ENCODE measurements at regions of chr11 and their contacts with region 1.

Region 1: DNA sequence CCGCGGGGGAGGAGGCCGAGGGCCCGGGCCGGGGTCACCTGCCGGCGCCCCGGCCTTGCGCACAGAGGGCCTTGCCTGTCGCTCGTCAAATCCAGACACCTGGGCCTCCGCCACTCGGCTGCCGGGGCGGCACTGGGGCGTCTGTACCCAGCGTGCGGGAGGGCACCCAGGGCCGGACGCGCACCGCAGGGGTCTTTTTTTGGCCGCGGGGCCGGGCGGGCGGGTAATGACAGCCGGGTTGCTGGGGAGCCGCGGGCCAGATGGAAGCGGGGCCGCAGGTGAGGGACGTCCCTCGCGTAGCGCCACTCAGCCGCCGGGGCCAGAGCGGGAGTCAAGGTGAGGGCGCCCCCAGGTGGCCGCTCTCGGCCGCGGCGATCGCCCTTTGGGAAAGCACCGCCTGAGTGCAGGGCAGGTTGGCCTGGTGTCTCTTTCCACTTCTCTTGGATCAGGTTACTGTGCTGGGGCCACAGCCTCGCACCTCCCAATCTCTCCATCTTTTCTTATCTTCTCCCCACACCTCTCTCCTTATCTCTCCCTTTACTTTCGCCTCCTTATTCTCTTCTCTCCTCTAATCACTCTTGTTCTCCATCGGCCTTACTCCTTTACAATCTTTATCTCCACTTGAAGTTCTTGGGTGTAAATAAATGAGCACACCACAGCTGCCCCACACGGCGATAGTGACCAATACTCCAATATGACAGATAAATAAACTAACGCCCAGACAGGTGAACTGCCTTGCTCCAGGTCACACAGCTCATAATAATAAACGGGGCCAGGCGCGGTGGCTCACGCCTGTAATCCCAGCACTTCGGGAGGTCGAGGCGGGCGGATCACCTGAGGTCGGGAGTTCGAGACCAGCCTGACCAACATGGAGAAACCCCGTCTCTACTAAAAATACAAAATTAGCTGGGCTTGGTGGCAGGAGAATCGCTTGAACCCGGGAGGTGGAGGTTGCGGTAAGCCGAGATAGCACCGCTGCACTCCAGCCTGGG is 3.7 kb downstream of the PHLDB1 start:
- DNase-seq: peak; percentile 77
- H3K4me3 ChIP-seq: peak overlapping the region; percentile 39
- H3K27ac ChIP-seq: no peak overlapping the region
- H3K4me1 ChIP-seq: peaks cover 23% of the 10 kb centered on the region
- H3K27me3 ChIP-seq: no peaks in the 10 kb centered on the region
- CTCF ChIP-seq: peak; percentile 91

Region 2: GRCh38 chr11:118435893-118436624 is 175.0 kb before region 1 on chr11 and contains the start of gene KMT2A:
- CTCF ChIA-PET with region 1: no interaction called
- POLR2A ChIA-PET with region 1: no interaction called
- intact Hi-C with region 1: no loop called
- DNase-seq: peak; percentile 100
- H3K4me3 ChIP-seq: peak within 1 kb of the TSS; percentile 93
- H3K27ac ChIP-seq: peak within 1 kb of the TSS; percentile 87
- H3K4me1 ChIP-seq: peaks cover 38% of the 10 kb centered on the region
- H3K27me3 ChIP-seq: no peaks in the 10 kb centered on the region
- CTCF ChIP-seq: no peak
- total RNA-seq, gene KMT2A: 116 and 121 TPM in 2 replicates

Region 3: GRCh38 chr11:118621071-118621783 is 10.1 kb after region 1 on chr11:
- CTCF ChIA-PET with region 1: interaction called, 10 read pairs
- POLR2A ChIA-PET with region 1: interaction called, 6 read pairs
- intact Hi-C with region 1: no loop called
- DNase-seq: peak; percentile 95
- H3K4me3 ChIP-seq: peak overlapping the region; percentile 66
- H3K27ac ChIP-seq: peak overlapping the region; percentile 77
- H3K4me1 ChIP-seq: peaks cover 54% of the 10 kb centered on the region
- H3K27me3 ChIP-seq: no peaks in the 10 kb centered on the region
- CTCF ChIP-seq: no peak

Region 4: DNA sequence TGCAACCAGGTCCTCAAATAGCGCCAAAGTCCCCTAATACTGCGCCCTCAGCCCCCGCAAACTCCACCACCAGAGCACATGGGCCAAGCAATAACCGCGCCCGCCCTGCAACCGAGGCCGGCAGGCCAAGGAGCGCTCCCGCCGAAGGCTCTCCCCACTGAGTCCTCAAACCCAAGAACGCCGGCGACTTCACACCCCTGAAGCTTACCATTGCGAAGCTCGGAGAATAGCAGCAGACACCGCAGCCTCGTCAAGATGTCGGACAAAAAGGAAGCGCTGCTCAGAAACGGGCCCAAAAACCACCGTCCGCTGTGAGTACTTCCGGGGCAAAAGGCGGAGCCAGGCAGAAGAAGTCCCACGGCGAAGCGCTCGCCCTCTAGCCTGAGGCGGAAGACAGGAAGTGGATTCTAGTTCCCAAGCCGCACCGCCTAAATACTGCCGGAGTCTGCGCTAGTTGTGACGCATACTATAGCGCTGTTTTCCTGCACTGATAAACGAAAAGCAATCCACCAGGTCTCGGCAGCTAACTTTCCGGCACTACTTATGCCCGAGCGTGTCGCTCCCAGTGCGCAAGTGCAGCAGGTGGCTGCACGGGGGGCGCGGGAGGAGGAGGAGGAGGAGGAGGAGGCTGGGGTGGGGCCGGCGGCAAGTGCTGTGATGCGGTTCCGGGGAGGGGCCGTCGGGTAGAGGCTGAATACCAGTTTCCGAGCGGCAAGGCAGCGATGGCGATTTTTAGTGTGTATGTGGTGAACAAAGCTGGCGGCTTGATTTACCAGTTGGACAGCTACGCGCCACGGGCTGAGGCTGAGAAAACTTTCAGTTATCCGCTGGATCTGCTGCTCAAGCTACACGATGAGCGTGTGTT is 407.2 kb after region 1 on chr11 and contains the starts of genes RPS25 and TRAPPC4:
- CTCF ChIA-PET with region 1: interaction called, 13 read pairs
- POLR2A ChIA-PET with region 1: no interaction called
- intact Hi-C with region 1: no loop called
- DNase-seq: peak; percentile 99
- H3K4me3 ChIP-seq: peak within 1 kb of the TSS; percentile 77
- H3K27ac ChIP-seq: peak within 1 kb of the TSS; percentile 95
- H3K4me1 ChIP-seq: peaks cover 18% of the 10 kb centered on the region
- H3K27me3 ChIP-seq: no peaks in the 10 kb centered on the region
- CTCF ChIP-seq: no peak
- total RNA-seq, gene RPS25: 1,091 and 1,176 TPM in 2 replicates
- total RNA-seq, gene TRAPPC4: 73.0 and 81.2 TPM in 2 replicates

Measured in A673 (cell line).